H1 (cell line): ENCODE measurements at regions of chr2 and their contacts with region 1.

Region 1: DNA sequence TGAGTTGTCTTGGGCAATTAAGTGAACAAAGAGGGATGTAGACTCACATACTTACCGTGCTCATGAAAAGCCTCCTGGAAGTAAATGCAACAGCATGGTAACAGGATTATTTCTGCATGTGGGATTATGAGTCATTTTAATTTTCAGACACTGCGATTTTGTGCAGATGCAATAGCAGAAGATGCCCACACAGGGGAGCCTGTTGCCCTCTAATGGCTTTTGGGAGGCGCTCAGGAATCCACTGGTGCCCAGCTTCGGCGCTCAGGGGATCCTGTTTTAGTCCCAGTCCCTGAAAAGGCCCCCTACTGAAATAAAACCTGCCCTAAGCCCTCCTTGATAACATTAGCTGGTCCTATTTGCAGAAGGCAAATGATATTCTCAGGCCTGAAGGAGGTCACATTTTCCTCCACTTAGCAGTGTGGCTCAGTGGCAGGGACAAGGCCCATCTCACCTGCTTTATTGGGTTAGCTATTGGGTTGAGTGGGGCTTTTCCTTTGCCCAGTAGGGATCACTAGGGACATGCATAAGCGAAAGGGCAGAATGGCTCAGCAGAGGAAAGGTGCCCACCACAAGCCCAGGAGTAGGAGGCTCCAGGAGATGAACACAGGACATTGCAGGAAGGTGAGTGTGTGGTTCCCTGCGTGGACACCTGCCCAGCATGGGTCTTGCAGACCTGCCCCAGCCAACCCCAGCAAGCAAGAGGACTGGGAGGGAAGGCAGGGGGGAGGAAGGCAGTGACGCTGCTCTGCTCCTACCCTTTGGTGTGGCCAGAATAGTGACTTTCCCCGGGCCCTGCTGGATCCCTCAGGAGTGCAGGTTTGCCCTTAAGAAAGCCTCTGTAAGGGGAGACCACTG is 26.5 kb upstream of the KCNS3 start:
- DNase-seq: peak in 1 of 2 experiments; percentile 70
- H3K4me3 ChIP-seq: no peak overlapping the region
- H3K27ac ChIP-seq: no peak overlapping the region
- H3K4me1 ChIP-seq: no peaks in the 10 kb centered on the region
- H3K27me3 ChIP-seq: no peaks in the 10 kb centered on the region
- CTCF ChIP-seq: peak; percentile 63 to 91 (median 83)
- EP300 ChIP-seq: no peak
- POLR2A ChIP-seq: no peak
- RAD21 ChIP-seq: peak; percentile 99

Region 2: DNA sequence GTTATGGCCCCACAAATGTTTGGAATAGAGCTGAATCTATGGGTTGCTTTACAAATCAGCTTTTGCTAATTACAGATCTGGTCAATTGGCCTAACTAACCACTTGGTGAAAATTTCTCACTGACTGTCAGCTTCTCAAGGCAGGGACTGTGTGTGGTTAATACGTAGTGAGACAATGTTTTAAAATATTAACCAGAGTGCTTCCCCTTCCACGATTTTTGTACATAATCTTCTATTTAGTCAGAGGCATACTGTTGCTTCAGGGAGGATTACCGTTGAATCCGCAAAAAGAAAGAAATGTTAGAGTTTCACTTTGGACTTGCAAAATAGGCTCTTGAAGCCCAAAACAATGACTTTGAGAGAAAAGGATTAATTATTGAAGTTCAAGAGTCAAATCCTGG is 11.6 kb after region 1 on chr2:
- CTCF ChIA-PET with region 1: interaction called, 15 read pairs
- POLR2A ChIA-PET with region 1: no interaction called
- DNase-seq: no peak
- H3K4me3 ChIP-seq: no peak overlapping the region
- H3K27ac ChIP-seq: no peak overlapping the region
- H3K4me1 ChIP-seq: no peaks in the 10 kb centered on the region
- H3K27me3 ChIP-seq: no peaks in the 10 kb centered on the region
- CTCF ChIP-seq: no peak
- EP300 ChIP-seq: no peak
- POLR2A ChIP-seq: no peak
- RAD21 ChIP-seq: no peak

Region 3: DNA sequence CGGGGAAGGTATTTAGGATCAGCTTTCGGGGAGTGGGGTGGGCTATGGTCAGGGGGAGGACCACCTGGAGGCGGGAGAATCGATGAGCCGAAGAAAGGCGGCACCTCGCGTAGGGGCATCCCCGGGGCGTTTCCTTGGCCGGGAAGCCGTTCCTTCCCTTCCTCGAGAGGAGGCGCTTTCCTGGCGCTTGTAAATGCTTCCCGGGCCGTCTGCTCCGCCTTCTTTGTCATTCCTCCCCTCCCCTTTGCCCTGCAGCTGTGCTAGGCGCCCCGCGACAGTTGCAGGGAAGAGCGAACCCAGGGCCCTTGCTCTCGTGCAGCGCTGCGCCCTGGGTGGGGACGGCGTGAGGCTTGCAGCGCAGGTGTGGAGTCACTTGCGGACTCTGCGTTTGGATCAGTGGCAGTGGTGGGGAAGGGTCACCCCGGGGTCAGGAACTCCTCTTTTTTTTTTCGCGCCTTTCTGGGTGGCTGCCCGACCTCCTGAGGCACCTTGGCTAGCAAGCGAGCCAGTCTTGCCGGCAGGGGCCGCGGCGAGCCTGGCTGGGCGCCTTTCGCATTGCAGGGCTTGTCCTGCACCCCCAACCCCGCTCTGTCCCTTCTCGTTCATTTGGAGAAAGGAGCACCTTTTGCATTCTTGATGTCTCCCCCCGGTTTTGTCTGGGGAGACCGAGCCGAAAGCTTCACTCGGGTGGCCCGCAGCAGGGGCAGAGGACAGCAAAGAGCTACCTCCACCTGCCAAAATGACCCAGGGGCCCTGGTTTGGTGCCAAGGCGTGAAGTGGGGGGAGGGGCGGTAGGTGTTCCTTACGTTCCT is 27.3 kb after region 1 on chr2:
- CTCF ChIA-PET with region 1: interaction called, 15 read pairs
- POLR2A ChIA-PET with region 1: no interaction called
- DNase-seq: peak; percentile 62 to 83
- H3K4me3 ChIP-seq: peak overlapping the region; percentile 78 to 95 (median 88)
- H3K27ac ChIP-seq: peak overlapping the region; percentile 45; the same call in 1 of the 2 replicates
- H3K4me1 ChIP-seq: peaks cover 2 to 18% (median 7%) of the 10 kb centered on the region in 4 experiments
- H3K27me3 ChIP-seq: peaks cover 9 to 21% (median 19%) of the 10 kb centered on the region in 4 experiments
- CTCF ChIP-seq: peak; percentile 19 to 45 (median 39); a peak in 3 of 4 replicates
- EP300 ChIP-seq: no peak
- POLR2A ChIP-seq: peak in 1 of 2 experiments; percentile 21; a peak in 2 of 3 replicates
- RAD21 ChIP-seq: peak; percentile 21 to 41; a peak in 3 of 4 replicates

Region 4: DNA sequence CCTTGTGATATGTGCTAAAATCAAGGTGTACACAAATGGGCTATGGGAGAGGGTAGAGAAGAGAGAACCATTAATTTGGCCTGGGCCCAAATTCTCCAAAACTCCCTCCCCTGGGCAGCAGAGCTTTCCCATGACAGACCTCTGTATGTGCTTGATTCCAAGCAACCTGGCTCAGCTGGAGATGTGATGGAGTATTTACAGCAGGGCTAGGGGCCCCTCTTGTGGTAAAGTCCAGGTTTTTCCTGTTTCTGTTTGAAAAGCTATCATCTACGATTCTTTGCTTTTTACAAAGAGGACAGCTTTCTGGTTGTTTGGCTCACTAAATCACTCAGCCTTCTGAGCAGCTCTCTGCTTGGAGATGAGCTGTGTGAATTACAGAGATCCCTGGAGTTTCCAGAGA is 66.8 kb after region 1 on chr2:
- CTCF ChIA-PET with region 1: interaction called, 76 read pairs
- POLR2A ChIA-PET with region 1: no interaction called
- DNase-seq: no peak
- H3K4me3 ChIP-seq: no peak overlapping the region
- H3K27ac ChIP-seq: no peak overlapping the region
- H3K4me1 ChIP-seq: peaks cover 2 to 11% (median 5%) of the 10 kb centered on the region in 4 experiments; a peak in 5 of 7 replicates
- H3K27me3 ChIP-seq: no peaks in the 10 kb centered on the region
- CTCF ChIP-seq: peak in 2 of 3 experiments; percentile 38 to 52; a peak in 3 of 4 replicates
- EP300 ChIP-seq: no peak
- POLR2A ChIP-seq: no peak
- RAD21 ChIP-seq: peak; percentile 77 to 85

Region 5: DNA sequence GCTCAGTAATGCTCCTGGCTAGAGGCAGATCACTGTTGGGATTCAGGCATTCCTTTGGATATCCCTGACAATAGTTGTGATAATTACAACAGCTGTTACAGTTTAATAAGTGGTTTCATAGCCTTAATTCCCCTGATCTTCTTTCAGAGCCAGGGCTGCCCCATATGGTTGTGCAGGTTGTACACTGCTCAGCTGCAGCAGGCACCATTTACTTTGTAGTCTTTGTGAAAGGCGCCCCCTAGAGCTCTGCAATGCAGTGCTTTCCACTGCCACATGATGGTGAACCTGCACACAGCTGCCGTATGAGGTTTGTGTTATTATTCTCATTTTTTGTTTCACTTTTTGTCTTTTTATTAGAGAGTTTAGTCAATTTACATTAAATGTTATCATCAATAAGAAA is 265.6 kb after region 1 on chr2:
- CTCF ChIA-PET with region 1: interaction called, 60 read pairs
- POLR2A ChIA-PET with region 1: interaction called, 3 read pairs
- DNase-seq: peak in 1 of 2 experiments; percentile 56
- H3K4me3 ChIP-seq: no peak overlapping the region
- H3K27ac ChIP-seq: no peak overlapping the region
- H3K4me1 ChIP-seq: no peaks in the 10 kb centered on the region
- H3K27me3 ChIP-seq: no peaks in the 10 kb centered on the region
- CTCF ChIP-seq: peak; percentile 62 to 73 (median 72)
- EP300 ChIP-seq: no peak
- POLR2A ChIP-seq: no peak
- RAD21 ChIP-seq: peak; percentile 75 to 83

Region 6: DNA sequence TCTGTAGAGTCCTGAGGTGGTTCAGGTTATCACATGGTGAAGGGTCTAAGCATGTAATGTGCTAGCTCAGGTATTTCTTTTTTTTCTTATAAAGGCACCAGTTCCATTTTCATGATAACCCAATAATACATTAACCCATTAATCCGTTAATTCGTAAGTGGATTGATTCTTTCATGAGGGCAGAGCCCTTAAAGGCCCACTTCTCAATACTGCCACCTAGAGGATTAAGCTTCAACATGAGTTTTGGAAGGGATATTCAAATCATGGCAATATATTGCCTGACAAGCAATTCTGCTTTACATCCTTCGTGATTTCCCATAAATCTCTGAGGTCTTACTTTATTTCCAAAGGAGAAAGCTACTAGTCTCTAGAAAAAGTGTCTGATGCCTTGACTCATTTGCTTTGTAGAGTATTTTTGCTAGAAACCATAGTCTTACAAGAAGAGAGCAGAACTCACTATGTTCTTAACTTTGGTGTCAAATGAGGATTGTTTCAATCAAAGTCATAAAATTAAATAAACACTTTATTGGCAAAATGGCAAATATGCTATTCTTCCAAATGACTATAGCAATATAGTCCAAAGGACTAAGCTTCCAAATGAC is 297.8 kb after region 1 on chr2:
- CTCF ChIA-PET with region 1: interaction called, 16 read pairs
- POLR2A ChIA-PET with region 1: no interaction called
- DNase-seq: no peak
- H3K4me3 ChIP-seq: no peak overlapping the region
- H3K27ac ChIP-seq: no peak overlapping the region
- H3K4me1 ChIP-seq: no peaks in the 10 kb centered on the region
- H3K27me3 ChIP-seq: no peaks in the 10 kb centered on the region
- CTCF ChIP-seq: peak in 2 of 3 experiments; percentile 50 to 69; a peak in 2 of 4 replicates
- EP300 ChIP-seq: no peak
- POLR2A ChIP-seq: no peak
- RAD21 ChIP-seq: peak; percentile 68

Region 7: GRCh38 chr2:18262601-18263000 is 410.6 kb after region 1 on chr2:
- CTCF ChIA-PET with region 1: no interaction called
- POLR2A ChIA-PET with region 1: no interaction called
- DNase-seq: no peak
- H3K4me3 ChIP-seq: no peak overlapping the region
- H3K27ac ChIP-seq: no peak overlapping the region
- H3K4me1 ChIP-seq: no peaks in the 10 kb centered on the region
- H3K27me3 ChIP-seq: no peaks in the 10 kb centered on the region
- CTCF ChIP-seq: no peak
- EP300 ChIP-seq: no peak
- POLR2A ChIP-seq: no peak
- RAD21 ChIP-seq: no peak

Region 8: DNA sequence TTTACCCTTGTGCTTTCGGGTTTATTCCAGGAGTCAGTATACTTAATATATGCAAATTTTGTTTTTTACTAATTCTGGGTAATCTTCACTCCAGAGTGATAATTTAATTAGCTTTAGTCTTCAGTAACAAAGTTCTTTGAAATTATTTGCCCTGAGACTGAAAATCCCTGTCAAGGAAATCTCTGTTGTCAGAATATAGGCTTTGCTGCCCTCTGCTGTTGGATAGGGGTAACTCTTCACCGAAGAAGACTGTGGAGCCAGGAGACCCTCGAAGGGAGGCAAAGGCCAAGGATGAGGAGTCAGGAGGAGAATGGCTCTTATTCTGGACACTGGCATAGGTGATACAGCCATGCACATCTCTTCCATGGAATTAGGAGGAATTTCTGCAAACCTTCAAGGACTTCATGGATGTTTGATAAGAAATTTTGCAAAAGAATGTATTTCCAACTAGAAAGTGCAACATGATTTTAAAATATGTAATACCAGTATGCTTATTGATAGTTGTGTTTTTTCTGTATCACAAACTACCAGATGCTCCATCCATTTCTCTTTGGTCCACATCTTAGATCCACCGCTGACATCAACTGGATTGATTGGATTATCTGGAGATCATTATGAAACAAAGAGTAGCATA is 526.2 kb after region 1 on chr2:
- CTCF ChIA-PET with region 1: interaction called, 29 read pairs
- POLR2A ChIA-PET with region 1: interaction called, 3 read pairs
- DNase-seq: peak in 1 of 2 experiments; percentile 58
- H3K4me3 ChIP-seq: no peak overlapping the region
- H3K27ac ChIP-seq: no peak overlapping the region
- H3K4me1 ChIP-seq: no peaks in the 10 kb centered on the region
- H3K27me3 ChIP-seq: no peaks in the 10 kb centered on the region
- CTCF ChIP-seq: peak; percentile 56 to 76 (median 68)
- EP300 ChIP-seq: no peak
- POLR2A ChIP-seq: no peak
- RAD21 ChIP-seq: peak; percentile 76 to 85